Dorsolateral prefrontal cortex (tissue), 120 donors: ENCODE measurements at regions of chr17 and their contacts with region 1.

Region 1: GRCh38 chr17:35849469-35850348 is 19.0 kb downstream of the HEATR9 start:
- DNase-seq: peak in 5 of 10 donors; percentile 27 to 60 (median 42)
- H3K4me3 ChIP-seq: no peak overlapping the region
- H3K27ac ChIP-seq: no peak overlapping the region
- H3K27me3 ChIP-seq: no peaks in the 10 kb centered on the region
- CTCF ChIP-seq: peak; percentile 36 to 84 (median 73)

Region 2: DNA sequence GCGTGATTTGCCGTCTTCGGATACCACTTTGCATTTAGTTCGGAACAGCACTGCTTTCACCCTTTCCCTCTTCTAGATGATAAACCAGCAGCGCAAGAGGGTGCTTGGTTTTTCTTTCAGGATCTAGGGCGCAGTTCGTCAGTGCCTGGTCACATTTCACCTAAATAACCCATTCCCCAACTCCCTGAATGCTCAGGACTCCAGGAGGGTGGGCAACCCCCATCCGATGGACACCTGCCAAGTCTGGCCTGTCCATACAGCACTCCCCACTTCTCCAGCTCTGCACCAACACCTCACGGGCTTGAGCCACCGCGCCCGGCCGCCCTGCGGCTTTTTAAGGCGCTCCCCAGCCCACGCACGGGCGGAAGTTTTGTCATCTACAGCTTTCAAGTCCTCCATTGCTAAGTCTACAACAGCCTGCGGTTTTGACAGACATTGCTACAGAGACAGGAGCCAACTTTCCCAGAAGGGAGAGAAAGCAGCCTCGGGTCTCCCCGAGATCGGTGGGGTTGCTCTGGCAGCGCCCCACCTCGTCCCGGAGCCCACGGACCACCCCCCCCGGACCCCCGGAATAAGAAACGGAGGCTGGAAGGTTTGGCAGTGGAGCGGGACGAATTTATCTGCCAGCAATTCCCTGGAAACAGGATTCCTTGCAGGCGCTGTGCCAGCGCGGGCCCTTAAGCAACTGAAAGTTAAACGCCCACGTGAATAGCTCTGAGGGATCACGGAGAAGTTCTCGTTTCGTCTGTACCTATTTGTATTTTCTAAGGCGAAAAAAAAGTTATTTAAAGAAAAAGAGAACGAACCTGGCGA is 362.6 kb before region 1 on chr17:
- intact Hi-C with region 1: no loop called
- DNase-seq: no peak
- H3K4me3 ChIP-seq: peak overlapping the region in 55 of 59 donors; percentile 7 to 62 (median 39)
- H3K27ac ChIP-seq: no peak overlapping the region
- H3K27me3 ChIP-seq: peaks cover 25 to 100% (median 88%) of the 10 kb centered on the region in 45 donors
- CTCF ChIP-seq: no peak

Region 3: DNA sequence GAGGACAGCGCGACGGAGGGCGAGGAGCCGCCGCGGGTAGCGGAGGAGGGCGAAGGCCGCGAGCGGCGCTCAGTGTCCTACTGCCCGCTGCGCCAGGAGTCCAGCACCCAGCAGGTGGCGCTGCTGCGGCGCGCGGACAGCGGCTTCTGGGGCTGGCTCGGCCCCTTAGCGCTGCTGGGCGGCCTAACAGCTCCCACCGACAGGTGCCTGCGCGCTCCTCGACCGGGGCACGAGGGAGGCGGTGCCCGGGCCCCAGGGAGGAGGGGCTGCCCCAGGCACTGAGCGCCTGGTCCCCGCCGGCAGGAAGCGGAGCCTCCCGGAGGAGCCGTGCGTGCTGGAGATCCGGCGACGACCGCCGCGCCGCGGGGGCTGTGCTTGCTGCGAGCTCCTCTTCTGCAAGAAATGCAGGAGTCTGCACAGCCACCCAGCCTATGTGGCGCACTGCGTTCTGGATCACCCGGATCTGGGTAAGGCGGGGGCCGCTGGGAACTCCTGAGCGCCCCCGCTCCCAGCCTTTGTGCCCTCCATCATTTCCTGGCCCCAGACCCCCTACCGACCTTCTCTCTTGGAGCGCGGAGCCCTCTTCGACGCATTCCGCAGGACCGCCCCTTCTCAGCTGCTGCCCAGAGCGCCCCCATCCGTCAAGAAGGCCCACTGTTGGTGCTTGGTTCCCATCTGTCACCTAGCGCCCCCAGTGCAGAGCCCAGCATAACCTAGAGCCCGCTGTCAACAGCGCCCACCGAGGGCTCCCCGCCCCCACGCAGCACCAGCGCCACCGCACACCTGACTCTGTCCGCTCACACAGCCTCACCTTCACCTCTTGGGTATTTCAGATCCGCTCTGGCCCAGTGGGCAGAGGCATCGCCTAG is 85.4 kb before region 1 on chr17:
- intact Hi-C with region 1: loop called in 1 of 2 experiments (anchors 10 kb)
- DNase-seq: peak; percentile 66 to 91 (median 78)
- H3K4me3 ChIP-seq: peak overlapping the region; percentile 44 to 85 (median 69)
- H3K27ac ChIP-seq: peak overlapping the region in 52 of 59 donors; percentile 12 to 92 (median 77)
- H3K27me3 ChIP-seq: no peaks in the 10 kb centered on the region
- CTCF ChIP-seq: peak; percentile 73 to 98 (median 93)

Region 4: DNA sequence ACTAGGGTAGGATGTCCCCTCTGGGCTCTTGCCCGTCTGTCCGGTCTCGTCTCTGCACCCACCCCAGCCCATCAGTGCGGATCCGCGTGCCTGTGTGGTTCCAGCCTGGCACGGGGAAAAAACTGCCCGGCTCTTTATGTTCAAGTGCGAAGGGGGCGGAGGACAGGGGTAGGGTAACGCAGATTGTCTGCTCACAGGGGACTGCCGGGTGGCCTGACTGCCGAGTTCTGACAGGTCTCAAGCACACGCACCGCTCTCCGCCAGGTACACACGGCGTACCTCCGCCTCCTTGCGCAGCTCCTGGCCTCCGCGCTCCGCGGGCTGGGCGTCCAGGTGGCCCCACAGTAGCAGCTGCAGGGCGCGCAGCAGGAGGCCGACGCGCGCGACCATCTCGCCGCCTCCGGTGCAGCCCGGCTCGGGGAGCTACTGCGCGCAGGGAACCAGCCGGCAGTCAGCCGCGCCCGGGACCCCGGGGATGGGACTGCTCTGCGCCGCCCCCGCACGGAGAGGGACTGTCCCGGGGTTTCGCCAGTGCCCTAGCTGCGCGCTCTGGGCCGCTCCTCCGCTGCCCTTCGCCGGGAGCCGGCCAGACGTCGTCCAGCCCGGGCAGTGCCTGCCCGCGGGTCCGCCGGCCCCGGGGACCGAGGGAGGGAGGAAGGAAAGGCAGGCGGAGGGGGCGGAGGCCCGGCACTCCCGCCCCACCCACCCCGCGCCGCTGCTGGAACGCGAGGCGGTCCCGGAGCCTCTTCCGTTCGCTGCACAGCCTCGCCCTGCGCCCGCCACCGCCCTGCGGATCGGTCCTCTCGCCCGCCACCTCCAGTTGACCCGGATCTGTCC is 54.5 kb before region 1 on chr17 and contains the start of gene MMP28:
- intact Hi-C with region 1: no loop called
- DNase-seq: peak in 1 of 10 donors; percentile 22
- H3K4me3 ChIP-seq: peak within 1 kb of the TSS; percentile 18 to 74 (median 62)
- H3K27ac ChIP-seq: peak within 1 kb of the TSS in 16 of 59 donors; percentile 5 to 71 (median 42)
- H3K27me3 ChIP-seq: peaks cover 0 to 49% (median 13%) of the 10 kb centered on the region in 45 donors
- CTCF ChIP-seq: no peak
- total RNA-seq, gene MMP28: 4.7 to 30.2 (median 13.2) TPM